Activated naive CD4-positive, alpha-beta T cell treated with anti-CD3 and anti-CD28 coated beads for 36 hours (primary cell): ENCODE measurements at regions of chr14 and their contacts with region 1.

Region 1: GRCh38 chr14:88029500-88029899 is 24.6 kb downstream of the GPR65 start:
- DNase-seq: peak; percentile 28
- H3K4me3 Mint-ChIP-seq: no peak overlapping the region
- H3K27ac Mint-ChIP-seq: peak overlapping the region; percentile 8
- H3K4me1 Mint-ChIP-seq: peaks cover 53% of the 10 kb centered on the region
- H3K27me3 Mint-ChIP-seq: no peaks in the 10 kb centered on the region

Region 2: DNA sequence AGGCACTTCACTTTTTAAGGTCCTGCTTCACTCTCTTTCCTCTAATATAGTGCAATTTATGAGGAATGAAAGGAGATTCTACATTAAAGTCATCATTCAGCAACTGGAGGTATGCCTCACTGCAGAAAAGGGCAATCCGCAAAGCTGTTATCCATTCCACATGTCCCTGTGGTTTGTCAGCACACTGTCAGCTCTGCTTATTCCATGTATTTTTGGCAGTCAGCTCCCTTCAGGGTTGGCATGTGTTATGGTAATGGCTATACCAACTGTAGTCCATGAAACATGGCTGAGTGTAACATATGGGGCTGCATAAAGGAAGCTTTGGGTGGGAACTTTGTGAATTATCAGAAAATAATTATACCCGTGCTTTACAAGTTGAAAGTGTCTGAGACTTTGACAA is 190.6 kb before region 1 on chr14:
- CTCF ChIA-PET with region 1: no interaction called
- intact Hi-C with region 1: no loop called
- DNase-seq: no peak
- H3K4me3 Mint-ChIP-seq: no peak overlapping the region
- H3K27ac Mint-ChIP-seq: no peak overlapping the region
- H3K4me1 Mint-ChIP-seq: no peaks in the 10 kb centered on the region
- H3K27me3 Mint-ChIP-seq: no peaks in the 10 kb centered on the region

Region 3: GRCh38 chr14:88044851-88045339 is 15.4 kb after region 1 on chr14:
- CTCF ChIA-PET with region 1: interaction called, 3 read pairs
- intact Hi-C with region 1: loop called (anchors 1 kb)
- DNase-seq: peak; percentile 20
- H3K4me3 Mint-ChIP-seq: no peak overlapping the region
- H3K27ac Mint-ChIP-seq: peak overlapping the region; percentile 69
- H3K4me1 Mint-ChIP-seq: peaks cover 14% of the 10 kb centered on the region
- H3K27me3 Mint-ChIP-seq: no peaks in the 10 kb centered on the region

Region 4: GRCh38 chr14:88129306-88130056 is 100.0 kb after region 1 on chr14:
- CTCF ChIA-PET with region 1: no interaction called
- intact Hi-C with region 1: no loop called
- DNase-seq: peak; percentile 13
- H3K4me3 Mint-ChIP-seq: no peak overlapping the region
- H3K27ac Mint-ChIP-seq: no peak overlapping the region
- H3K4me1 Mint-ChIP-seq: peaks cover 19% of the 10 kb centered on the region
- H3K27me3 Mint-ChIP-seq: peaks cover 5% of the 10 kb centered on the region

Region 5: DNA sequence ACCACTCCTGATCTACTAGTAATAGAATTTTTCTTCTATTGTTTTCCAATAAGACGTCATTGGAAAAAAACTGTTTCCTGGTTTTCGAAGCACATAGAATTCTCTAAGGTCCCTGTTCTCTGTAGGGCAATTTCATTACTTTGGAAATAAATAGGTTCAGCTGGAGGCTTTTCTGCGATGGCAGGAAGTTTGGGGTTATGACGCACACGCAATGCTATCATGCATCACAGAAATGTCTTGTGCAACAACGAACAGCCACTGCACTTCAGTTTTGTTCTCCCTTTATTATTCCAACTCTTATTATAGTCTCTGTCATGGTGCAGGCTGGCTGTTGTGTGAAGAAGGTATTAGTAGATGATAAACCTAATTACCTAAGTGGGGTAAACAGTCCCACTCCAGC is 234.6 kb after region 1 on chr14:
- CTCF ChIA-PET with region 1: no interaction called
- intact Hi-C with region 1: no loop called
- DNase-seq: no peak
- H3K4me3 Mint-ChIP-seq: no peak overlapping the region
- H3K27ac Mint-ChIP-seq: no peak overlapping the region
- H3K4me1 Mint-ChIP-seq: no peaks in the 10 kb centered on the region
- H3K27me3 Mint-ChIP-seq: peaks cover 23% of the 10 kb centered on the region